CD4-positive, alpha-beta memory T cell (primary cell): ENCODE measurements at regions of chr22 and their contacts with region 1.

Region 1: DNA sequence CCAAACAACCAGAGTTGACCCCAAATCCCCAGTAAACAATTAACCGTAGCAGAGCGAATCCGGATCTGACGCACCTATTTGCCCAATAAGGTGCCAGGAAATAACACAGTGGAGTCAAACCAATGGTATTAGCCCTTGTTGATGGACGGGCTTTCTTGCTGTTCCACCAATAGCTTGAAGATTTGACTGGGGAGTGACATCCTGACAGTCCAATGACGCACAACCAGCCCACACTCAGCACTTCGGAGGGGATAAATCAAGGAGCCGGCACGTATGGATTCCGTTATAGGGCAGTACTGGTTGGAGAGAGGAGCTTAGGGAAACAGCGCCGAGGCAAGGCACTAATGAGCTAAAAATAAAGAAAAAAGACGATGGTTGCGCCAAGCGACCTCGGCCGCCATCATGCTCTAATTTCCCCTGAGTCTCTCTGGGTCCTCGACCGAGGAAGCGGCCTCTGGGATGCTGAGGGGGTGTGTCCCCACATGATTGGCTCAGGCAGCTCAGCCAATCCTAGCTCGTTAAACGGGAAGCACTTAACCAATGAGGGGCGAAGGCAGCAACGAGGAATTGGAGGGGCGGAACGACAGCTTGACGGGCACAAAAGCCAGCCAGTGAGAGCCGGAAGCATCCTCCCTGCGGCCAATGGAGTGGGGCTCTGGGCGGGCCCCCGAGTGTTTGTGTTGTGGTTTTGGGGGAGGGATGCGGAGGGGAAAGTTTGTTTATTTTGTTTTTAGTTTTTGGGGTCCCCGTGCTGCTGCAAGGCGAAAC is 49.5 kb downstream of the FAM83F start:
- DNase-seq: peak; percentile 99 to 100 (median 99)
- H3K4me3 ChIP-seq: peak overlapping the region; percentile 60 to 67
- H3K4me3 Mint-ChIP-seq: peak overlapping the region; percentile 95 to 100 (median 98)
- H3K27ac ChIP-seq: peak overlapping the region; percentile 88
- H3K27ac Mint-ChIP-seq: peak overlapping the region; percentile 99 to 100 (median 100)
- H3K4me1 ChIP-seq: peaks cover 32% of the 10 kb centered on the region
- H3K4me1 Mint-ChIP-seq: peaks cover 22 to 47% (median 36%) of the 10 kb centered on the region in 4 donors
- H3K27me3 ChIP-seq: no peaks in the 10 kb centered on the region
- H3K27me3 Mint-ChIP-seq: peaks cover 4 to 10% of the 10 kb centered on the region in 2 donors

Region 2: GRCh38 chr22:40055143-40055883 is 11.0 kb after region 1 on chr22:
- CTCF ChIA-PET with region 1: interaction called, 5 read pairs
- POLR2A ChIA-PET with region 1: interaction called, 89 read pairs
- intact Hi-C with region 1: loop called (anchors 1 kb)
- DNase-seq: peak; percentile 53 to 78 (median 63)
- H3K4me3 ChIP-seq: peak overlapping the region; percentile 30 to 33
- H3K4me3 Mint-ChIP-seq: peak overlapping the region; percentile 59 to 86 (median 77)
- H3K27ac ChIP-seq: peak overlapping the region; percentile 64
- H3K27ac Mint-ChIP-seq: peak overlapping the region; percentile 90 to 96 (median 93)
- H3K4me1 ChIP-seq: peaks cover 92% of the 10 kb centered on the region
- H3K4me1 Mint-ChIP-seq: peaks cover 65 to 91% (median 78%) of the 10 kb centered on the region in 4 donors
- H3K27me3 ChIP-seq: no peaks in the 10 kb centered on the region
- H3K27me3 Mint-ChIP-seq: no peaks in the 10 kb centered on the region

Region 3: DNA sequence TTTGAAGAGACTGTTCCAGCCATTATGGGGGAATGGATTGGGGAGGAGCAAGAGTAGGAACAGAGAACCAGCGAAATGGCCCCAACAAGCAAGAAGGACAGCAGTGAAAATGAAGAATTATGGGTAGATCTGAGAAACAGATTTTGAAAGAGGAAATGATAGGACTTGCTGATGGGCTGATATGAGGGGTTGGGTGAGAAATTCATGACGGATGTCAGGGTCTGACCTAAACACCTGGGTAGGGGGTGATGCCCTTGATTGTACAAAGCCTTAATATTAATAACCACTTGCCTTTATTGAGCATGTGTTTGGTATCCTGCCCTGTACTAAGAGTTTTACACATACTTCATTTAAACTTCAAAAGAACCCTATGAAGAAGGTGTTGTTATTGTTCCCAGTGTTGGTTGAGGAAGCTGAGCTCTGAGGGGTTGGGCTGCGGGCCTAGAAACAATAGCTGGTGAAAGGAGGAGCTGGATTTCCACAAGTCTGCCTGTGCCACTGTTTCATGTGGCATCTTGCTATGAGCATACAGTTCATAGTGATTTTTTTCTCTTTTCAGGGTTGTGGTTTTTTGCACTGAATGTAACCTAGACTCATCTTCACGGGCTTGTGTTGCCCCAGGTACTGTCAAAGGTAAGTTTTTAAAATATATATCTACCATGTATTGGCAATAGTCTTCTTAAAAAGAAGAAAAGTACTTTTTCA is 72.4 kb after region 1 on chr22:
- CTCF ChIA-PET with region 1: no interaction called
- POLR2A ChIA-PET with region 1: interaction called, 11 read pairs
- intact Hi-C with region 1: no loop called
- DNase-seq: peak; percentile 74 to 87 (median 81)
- H3K4me3 ChIP-seq: no peak overlapping the region
- H3K4me3 Mint-ChIP-seq: peak overlapping the region; percentile 56 to 87 (median 68)
- H3K27ac ChIP-seq: peak overlapping the region; percentile 42
- H3K27ac Mint-ChIP-seq: peak overlapping the region; percentile 81 to 94 (median 86)
- H3K4me1 ChIP-seq: peaks cover 67% of the 10 kb centered on the region
- H3K4me1 Mint-ChIP-seq: peaks cover 53 to 86% (median 68%) of the 10 kb centered on the region in 4 donors
- H3K27me3 ChIP-seq: no peaks in the 10 kb centered on the region
- H3K27me3 Mint-ChIP-seq: no peaks in the 10 kb centered on the region

Region 4: DNA sequence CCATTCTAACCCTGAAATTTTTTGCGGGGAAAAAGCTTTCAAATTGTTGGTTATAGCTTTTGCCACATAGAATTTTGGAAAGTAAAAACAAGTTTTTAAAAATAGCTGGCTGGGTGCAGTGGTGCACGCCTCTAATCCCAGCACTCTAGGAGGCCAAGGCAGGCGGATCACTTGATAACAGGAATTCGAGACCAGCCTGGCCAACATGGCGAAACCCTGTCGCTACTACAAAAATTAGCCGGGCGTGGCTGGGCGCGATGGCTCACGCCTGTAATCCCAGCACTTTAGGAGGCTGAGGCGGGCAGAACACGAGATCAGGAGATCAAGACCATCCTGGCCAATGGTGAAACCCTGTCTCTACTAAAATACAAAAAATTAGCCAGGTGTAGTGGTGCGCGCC is 188.3 kb after region 1 on chr22:
- CTCF ChIA-PET with region 1: no interaction called
- POLR2A ChIA-PET with region 1: no interaction called
- intact Hi-C with region 1: no loop called
- DNase-seq: no peak
- H3K4me3 ChIP-seq: no peak overlapping the region
- H3K4me3 Mint-ChIP-seq: no peak overlapping the region
- H3K27ac ChIP-seq: no peak overlapping the region
- H3K27ac Mint-ChIP-seq: peak overlapping the region in 1 of 7 donors; percentile 2
- H3K4me1 ChIP-seq: peaks cover 32% of the 10 kb centered on the region
- H3K4me1 Mint-ChIP-seq: peaks cover 27 to 60% (median 43%) of the 10 kb centered on the region in 4 donors
- H3K27me3 ChIP-seq: no peaks in the 10 kb centered on the region
- H3K27me3 Mint-ChIP-seq: no peaks in the 10 kb centered on the region

Region 5: DNA sequence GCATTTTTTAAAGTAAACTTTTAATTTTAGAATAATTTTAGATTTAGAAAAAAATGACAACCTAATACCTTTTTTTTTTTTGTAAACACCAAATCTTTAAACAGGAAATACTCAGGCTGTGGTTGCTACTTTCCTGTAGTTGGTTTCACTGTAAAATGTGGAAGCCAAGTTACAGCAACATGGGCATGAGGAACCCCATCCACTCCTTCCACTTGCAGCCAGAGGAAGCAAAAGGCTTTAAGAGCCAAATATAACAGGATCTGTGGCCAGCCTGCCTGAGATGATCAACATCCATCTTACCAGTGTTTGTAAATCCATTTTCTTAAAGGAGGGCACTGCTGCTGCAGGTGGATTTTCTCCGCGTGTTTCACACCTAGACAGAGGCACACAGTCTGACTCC is 199.6 kb after region 1 on chr22:
- CTCF ChIA-PET with region 1: interaction called, 3 read pairs
- POLR2A ChIA-PET with region 1: interaction called, 15 read pairs
- intact Hi-C with region 1: no loop called
- DNase-seq: peak in 4 of 5 donors; percentile 46 to 61 (median 50)
- H3K4me3 ChIP-seq: peak overlapping the region in 1 of 2 donors; percentile 13
- H3K4me3 Mint-ChIP-seq: peak overlapping the region; percentile 69 to 86 (median 77)
- H3K27ac ChIP-seq: peak overlapping the region; percentile 35
- H3K27ac Mint-ChIP-seq: peak overlapping the region; percentile 53 to 88 (median 79)
- H3K4me1 ChIP-seq: peaks cover 95% of the 10 kb centered on the region
- H3K4me1 Mint-ChIP-seq: peaks cover 63 to 95% (median 76%) of the 10 kb centered on the region in 4 donors
- H3K27me3 ChIP-seq: no peaks in the 10 kb centered on the region
- H3K27me3 Mint-ChIP-seq: no peaks in the 10 kb centered on the region

Region 6: DNA sequence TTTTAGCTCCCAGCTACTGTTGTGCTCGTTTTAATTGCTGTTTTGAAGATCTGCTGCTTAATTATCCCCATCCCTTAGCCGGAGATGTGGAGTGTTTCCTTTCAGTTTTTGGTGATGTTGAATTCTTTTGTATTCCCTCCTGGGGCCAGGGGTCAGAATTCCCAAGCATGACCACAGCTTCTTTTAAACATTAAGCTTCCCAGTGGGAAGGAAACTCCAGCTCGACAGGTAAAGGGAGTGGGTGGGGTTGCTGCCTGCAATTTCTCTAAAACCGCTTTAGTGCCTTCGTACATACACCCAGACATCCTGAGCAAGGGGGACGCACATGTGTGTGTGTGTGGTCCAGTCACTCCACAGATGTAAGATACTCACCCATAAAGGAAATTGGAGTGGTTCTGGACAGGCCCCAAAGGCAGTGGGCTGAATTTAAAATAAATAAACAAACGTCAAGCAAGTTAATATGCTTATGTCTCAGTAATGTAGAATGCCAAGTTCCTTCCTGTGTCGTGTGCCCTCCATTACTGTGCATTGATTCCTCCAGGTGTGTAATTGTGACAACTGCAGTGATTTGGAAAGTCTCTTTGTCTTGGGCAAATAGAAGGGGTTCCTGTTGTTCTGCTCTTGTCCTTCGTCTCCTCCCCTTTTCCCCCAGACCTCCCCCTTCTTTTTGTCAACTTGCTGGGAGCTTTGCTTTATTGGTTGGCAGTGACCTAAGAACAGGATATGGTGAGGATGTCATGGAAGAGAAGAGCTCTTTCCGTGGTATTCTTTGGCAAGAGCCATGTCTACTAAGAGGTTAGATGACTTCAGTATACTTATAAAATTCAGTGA is 282.8 kb after region 1 on chr22:
- CTCF ChIA-PET with region 1: no interaction called
- POLR2A ChIA-PET with region 1: interaction called, 15 read pairs
- intact Hi-C with region 1: no loop called
- DNase-seq: peak in 4 of 5 donors; percentile 29 to 80 (median 47)
- H3K4me3 ChIP-seq: no peak overlapping the region
- H3K4me3 Mint-ChIP-seq: peak overlapping the region; percentile 51 to 82 (median 56)
- H3K27ac ChIP-seq: peak overlapping the region; percentile 34
- H3K27ac Mint-ChIP-seq: peak overlapping the region; percentile 79 to 98 (median 94)
- H3K4me1 ChIP-seq: peaks cover 98% of the 10 kb centered on the region
- H3K4me1 Mint-ChIP-seq: peaks cover 69 to 100% (median 88%) of the 10 kb centered on the region in 4 donors
- H3K27me3 ChIP-seq: no peaks in the 10 kb centered on the region
- H3K27me3 Mint-ChIP-seq: no peaks in the 10 kb centered on the region

Region 7: DNA sequence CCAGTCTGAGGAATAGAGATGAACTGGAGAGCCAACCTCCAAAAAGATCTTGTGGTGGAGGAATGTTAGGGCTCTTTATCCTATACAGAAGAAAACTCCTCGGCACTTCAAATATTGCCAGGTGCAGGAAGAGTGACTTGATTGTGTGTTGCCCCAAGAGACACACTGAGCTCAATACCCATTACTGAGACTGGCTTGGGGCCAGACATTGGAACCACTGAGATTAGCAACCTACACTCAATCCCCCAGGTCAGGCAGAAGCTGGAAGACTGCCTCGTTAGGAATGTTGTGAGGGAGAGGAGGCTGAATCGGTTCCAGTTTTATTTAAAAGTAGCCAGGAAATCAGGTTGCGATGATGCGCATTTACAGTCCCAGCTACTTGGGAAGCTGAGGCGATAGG is 323.7 kb after region 1 on chr22:
- CTCF ChIA-PET with region 1: no interaction called
- POLR2A ChIA-PET with region 1: interaction called, 11 read pairs
- intact Hi-C with region 1: no loop called
- DNase-seq: no peak
- H3K4me3 ChIP-seq: no peak overlapping the region
- H3K4me3 Mint-ChIP-seq: no peak overlapping the region
- H3K27ac ChIP-seq: no peak overlapping the region
- H3K27ac Mint-ChIP-seq: peak overlapping the region in 2 of 7 donors; percentile 66 to 75
- H3K4me1 ChIP-seq: peaks cover 21% of the 10 kb centered on the region
- H3K4me1 Mint-ChIP-seq: peaks cover 15 to 17% (median 17%) of the 10 kb centered on the region in 4 donors
- H3K27me3 ChIP-seq: no peaks in the 10 kb centered on the region
- H3K27me3 Mint-ChIP-seq: no peaks in the 10 kb centered on the region

Region 8: GRCh38 chr22:40628354-40629042 is 584.2 kb after region 1 on chr22:
- CTCF ChIA-PET with region 1: no interaction called
- POLR2A ChIA-PET with region 1: no interaction called
- intact Hi-C with region 1: no loop called
- DNase-seq: no peak
- H3K4me3 ChIP-seq: no peak overlapping the region
- H3K4me3 Mint-ChIP-seq: peak overlapping the region in 1 of 8 donors; percentile 10
- H3K27ac ChIP-seq: no peak overlapping the region
- H3K27ac Mint-ChIP-seq: peak overlapping the region in 4 of 7 donors; percentile 25 to 70 (median 44)
- H3K4me1 ChIP-seq: peaks cover 17% of the 10 kb centered on the region
- H3K4me1 Mint-ChIP-seq: peaks cover 26 to 62% (median 44%) of the 10 kb centered on the region in 4 donors
- H3K27me3 ChIP-seq: no peaks in the 10 kb centered on the region
- H3K27me3 Mint-ChIP-seq: no peaks in the 10 kb centered on the region